ENCODE measurements at regions of chr5 and their contacts with region 1.

Region 1: GRCh38 chr5:139787568-139788293 is 7.9 kb upstream of the PSD2 start:
- DNase-seq: peak; percentile 73 to 99 (median 94)

Region 2: GRCh38 chr5:139828207-139828895 is 40.6 kb after region 1 on chr5:
- intact Hi-C with region 1: loop called (anchors 5 kb)
- DNase-seq: peak; percentile 33 to 88 (median 76)

Region 3: GRCh38 chr5:139844472-139845145 is 56.9 kb after region 1 on chr5:
- intact Hi-C with region 1: loop called (anchors 2 kb)
- DNase-seq: peak; percentile 60 to 96 (median 85)

Region 4: DNA sequence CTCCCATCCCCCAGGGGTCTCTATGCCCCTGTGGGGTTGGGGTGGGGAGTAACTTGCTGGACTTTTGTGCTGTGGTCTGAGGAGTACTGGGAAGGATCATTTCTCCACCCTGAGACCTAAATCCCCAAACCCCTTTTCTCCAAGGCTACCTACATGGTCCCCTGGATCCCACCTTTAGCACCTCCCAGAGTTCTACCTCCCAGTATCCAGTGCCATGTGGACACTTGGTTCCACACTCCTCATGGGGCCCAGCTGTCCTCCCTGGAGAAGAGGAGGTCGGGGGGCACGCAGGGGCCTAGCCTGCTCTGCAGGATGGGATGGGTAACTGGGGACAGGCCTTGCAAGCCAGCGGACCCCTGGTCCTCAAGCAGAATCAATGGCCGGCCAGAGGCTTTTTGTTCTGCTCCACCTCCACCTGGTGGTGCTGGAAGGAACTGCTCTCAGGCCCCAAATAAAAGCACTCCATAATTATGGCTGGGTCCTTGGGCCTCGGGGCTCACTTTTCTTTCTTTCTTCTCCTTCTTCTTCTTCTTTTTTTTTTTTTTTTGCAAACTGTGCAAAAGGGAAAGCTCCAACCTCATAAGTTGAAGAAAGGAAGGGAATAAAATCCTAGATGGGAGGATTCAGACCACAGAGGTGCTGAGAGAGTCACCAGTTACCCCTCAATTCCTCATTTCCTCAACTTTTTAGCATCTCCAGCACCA is 76.3 kb after region 1 on chr5:
- intact Hi-C with region 1: loop called (anchors 5 kb)
- DNase-seq: peak; percentile 48 to 93 (median 80)

Region 5: GRCh38 chr5:139968547-139969261 is 181.0 kb after region 1 on chr5:
- intact Hi-C with region 1: loop called (anchors 2 kb)
- DNase-seq: peak; percentile 84 to 96 (median 91)

Region 6: DNA sequence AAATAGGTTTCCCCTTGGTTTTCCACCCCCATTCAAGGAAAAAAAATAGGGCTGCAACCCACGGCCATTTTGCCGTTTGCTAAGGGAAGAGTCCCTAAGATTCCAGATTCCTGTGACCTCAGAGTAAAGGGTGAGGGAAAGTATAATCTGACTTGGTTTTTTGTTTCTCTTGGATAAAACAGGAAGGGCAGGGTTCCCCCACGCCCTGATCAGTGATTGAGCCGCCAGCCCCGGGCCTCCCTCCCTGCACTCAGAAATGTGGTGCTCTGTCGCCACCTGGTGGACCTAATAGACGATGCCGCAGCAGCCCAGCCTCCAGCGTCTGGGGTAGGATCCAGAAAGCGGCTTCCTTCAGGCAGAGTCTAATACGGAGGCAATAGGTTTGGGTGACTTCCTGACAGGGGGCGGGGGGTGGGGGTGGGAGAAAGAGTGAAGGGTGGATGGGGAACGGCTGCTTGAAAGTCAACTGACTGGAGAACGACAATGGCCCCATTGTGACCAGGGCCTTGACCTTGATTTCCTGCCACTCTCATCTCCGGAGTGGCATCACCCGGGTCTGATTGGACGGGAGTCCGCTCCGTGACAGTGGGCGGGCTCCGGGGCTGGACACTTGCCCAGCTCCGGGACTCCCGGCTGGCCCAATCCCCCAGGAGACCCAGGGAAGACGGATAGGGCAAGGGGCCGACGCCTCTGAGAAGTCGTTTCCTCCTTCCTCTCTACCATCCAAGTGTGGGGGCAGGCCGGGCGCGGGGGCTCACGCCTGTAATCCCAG is 369.5 kb after region 1 on chr5:
- intact Hi-C with region 1: loop called (anchors 10 kb)
- DNase-seq: peak; percentile 80 to 96 (median 91)